ENCODE measurements at regions of chr9 and their contacts with region 1.

Region 1: GRCh38 chr9:89602978-89603766 is 1.6 kb upstream of the GADD45G start:
- DNase-seq: peak; percentile 83 to 90
- H3K4me3 ChIP-seq: peak overlapping the region; percentile 65 to 79 (median 71)
- H3K27ac ChIP-seq: peak overlapping the region in 1 of 2 donors; percentile 13
- H3K4me1 ChIP-seq: peaks cover 6 to 22% of the 10 kb centered on the region in 2 donors
- H3K27me3 ChIP-seq: no peaks in the 10 kb centered on the region
- CTCF ChIP-seq: peak; percentile 53 to 92 (median 85)
- POLR2A ChIP-seq: no peak

Region 2: GRCh38 chr9:89634995-89635742 is 32.0 kb after region 1 on chr9:
- intact Hi-C with region 1: no loop called
- DNase-seq: peak in 1 of 2 donors; percentile 69
- H3K4me3 ChIP-seq: no peak overlapping the region
- H3K27ac ChIP-seq: peak overlapping the region in 1 of 2 donors; percentile 9
- H3K4me1 ChIP-seq: no peaks in the 10 kb centered on the region
- H3K27me3 ChIP-seq: no peaks in the 10 kb centered on the region
- CTCF ChIP-seq: no peak
- POLR2A ChIP-seq: no peak

Region 3: DNA sequence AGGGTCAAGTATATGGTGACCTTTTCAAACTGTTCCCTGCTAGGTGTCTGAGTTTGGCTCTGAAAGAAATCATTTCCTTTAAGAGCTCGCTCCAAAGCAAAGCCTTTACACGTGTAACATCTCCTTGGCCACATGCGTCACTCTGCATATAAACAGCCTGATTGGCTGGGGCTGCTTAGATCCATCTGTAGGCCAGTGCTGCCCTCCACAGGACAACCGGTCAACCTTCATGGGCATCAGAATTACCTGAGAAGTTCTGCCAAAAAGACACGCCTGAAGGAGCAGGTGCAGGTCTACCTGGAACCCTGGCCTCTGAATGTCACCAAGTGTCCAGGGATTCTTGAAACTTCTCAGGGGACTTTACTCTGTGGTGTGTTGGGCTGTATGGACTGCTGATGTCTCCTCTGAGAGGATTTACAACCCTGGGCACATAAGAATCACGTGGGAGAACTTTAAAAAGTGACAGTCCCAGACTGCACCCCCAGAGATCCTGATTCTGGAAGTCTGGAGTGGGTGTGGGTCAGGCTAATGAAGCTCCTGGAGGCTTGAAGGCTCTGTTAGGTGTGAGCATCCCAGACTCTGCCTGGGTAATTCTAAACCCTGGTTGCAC is 499.2 kb after region 1 on chr9:
- intact Hi-C with region 1: loop called (anchors 10 kb)
- DNase-seq: peak; percentile 79 to 86
- H3K4me3 ChIP-seq: no peak overlapping the region
- H3K27ac ChIP-seq: no peak overlapping the region
- H3K4me1 ChIP-seq: no peaks in the 10 kb centered on the region
- H3K27me3 ChIP-seq: no peaks in the 10 kb centered on the region
- CTCF ChIP-seq: peak; percentile 57 to 91 (median 88)
- POLR2A ChIP-seq: no peak